ENCODE measurements at regions of chr3 and their contacts with region 1.

Region 1: DNA sequence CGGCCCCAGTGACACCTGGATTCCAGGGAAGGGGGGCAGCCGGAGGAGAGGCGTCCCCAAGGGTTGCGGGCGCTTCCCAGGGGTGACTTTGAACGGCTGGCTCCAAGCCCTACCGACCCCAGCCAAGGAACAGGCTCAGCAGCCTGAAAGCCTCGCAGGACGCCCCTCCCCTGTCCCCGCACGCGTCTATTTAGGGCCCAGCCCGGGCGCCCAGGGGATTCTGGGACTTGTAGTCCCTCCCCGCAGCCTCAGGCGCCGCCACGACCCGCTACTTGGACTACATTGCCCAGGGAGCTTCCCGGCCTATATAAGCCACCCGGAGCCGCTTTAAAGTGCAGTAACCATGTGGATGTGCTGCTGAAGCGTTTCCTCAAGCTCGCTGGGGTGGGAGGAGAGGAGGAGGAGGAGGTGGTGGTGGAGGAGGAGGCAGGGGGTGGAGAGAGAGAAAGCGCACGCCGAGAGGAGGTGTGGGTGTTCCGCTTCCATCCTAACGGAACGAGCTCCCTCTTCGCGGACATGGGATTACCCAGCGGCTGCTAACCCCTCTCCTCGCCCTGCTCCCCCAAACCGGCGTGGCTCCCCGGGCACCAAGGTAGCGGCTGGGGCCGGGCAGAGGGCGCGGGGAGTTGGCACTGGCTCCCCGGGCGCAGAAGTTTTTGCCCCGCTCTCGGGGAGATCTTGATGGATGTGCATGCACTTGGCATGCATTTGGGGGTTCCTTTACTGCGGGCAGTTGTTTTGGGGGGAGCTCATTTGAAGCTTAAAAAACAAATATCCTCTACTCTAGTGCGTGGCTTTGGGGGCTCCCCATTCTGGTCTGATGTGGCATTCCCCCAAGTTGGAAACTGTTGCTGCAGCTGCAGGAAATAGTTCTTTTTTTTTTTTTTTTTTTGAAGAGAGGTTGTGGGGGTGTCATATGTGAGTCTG is at the start of gene ITPR1:
- DNase-seq: peak in 1 of 2 donors; percentile 100
- H3K4me3 ChIP-seq: peak within 1 kb of the TSS; percentile 59 to 94
- H3K27ac ChIP-seq: peak within 1 kb of the TSS; percentile 77
- H3K4me1 ChIP-seq: peaks cover 32% of the 10 kb centered on the region
- H3K27me3 ChIP-seq: no peaks in the 10 kb centered on the region
- CTCF ChIP-seq: no peak
- POLR2A ChIP-seq: peak; percentile 89 to 100
- total RNA-seq, gene ITPR1: 108 TPM

Region 2: GRCh38 chr3:4350789-4351163 is 142.5 kb before region 1 on chr3:
- intact Hi-C with region 1: loop called (anchors 10 kb)
- DNase-seq: no peak
- H3K4me3 ChIP-seq: peak overlapping the region in 1 of 2 donors; percentile 23
- H3K27ac ChIP-seq: no peak overlapping the region
- H3K4me1 ChIP-seq: peaks cover 4% of the 10 kb centered on the region
- H3K27me3 ChIP-seq: no peaks in the 10 kb centered on the region
- CTCF ChIP-seq: peak; percentile 50 to 83 (median 69)
- POLR2A ChIP-seq: no peak

Region 3: DNA sequence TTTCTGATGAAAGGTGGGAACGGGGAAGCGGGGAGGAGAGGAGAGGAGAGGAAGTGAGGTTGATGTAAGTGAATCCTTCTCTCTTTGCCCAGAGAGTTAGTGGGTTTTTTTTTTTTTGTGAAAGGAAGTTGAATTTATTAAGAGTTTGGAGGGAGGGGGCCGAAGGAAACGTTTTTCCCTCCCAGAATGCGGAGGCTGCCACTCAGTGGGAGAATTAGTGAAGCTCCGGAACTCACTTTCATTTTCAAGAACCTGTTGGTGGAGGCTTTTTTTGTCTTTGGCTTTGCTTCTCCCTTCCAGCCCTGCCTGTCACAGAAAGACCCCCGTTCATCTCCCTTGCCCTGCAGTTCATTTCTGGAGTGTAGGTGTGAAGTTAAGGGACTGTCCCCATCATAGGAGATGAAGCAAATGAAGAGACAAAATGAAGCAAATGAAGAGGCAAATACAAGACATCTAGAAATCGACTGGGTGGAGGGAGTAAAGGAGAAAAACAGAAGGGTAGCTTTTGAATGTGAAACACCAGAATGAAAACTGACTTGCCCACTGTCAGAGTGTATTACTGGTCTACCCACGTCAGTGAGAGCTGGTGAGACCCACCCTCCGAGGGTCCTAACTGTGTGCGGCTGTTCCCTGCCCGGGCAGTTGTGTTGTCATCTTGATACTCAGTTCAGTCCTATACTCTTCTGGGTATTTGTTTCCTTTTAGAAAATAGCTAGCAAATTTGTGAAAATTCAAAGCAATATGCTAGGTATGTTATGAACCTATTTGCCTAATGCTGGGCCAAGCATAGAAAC is 91.4 kb after region 1 on chr3:
- intact Hi-C with region 1: loop called (anchors 5 kb)
- DNase-seq: peak in 1 of 2 donors; percentile 80
- H3K4me3 ChIP-seq: peak overlapping the region; percentile 8 to 30
- H3K27ac ChIP-seq: peak overlapping the region; percentile 74
- H3K4me1 ChIP-seq: peaks cover 60% of the 10 kb centered on the region
- H3K27me3 ChIP-seq: no peaks in the 10 kb centered on the region
- CTCF ChIP-seq: no peak
- POLR2A ChIP-seq: no peak

Region 4: DNA sequence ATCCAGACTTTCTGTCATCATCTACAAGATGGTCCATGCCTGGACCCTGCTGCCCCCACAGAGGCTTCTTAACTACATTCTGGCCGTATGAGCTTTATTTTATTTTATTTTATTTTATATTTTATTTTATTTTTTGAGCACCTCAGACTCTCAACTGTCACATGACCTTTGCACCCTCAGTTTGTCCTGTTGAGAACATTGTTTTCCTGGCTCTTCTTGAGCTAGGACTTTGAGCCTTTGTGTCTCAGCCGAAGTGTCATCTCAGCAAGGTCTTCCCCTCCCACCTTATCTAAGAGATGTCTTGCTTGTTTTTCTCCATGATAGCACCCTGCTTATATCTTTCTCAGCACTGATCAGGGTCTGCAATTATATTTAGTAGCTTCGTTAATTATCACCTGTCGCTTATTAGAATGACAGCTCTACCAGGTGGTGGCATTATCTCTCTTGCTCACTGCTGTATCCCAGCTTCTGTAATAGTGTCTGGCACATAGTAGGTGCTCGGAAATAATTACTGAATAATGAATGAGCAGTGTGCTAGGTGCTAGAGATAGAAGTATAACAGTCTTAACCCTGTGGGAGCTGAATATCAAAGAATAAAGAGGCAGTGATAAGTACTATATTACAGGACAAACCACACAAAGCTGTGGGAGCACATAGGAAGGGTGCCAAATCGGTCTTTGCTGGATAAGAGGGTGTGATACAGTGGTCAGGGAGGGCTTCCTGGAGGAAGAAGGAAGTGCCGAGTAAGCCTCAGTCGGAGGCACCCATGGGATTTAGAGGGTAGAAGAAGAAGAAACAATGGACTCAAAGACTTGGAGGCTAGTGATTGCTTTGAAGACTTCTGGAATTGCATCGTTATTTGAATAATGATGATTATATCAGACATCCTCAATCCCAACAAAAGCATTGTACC is 136.1 kb after region 1 on chr3:
- intact Hi-C with region 1: no loop called
- DNase-seq: no peak
- H3K4me3 ChIP-seq: no peak overlapping the region
- H3K27ac ChIP-seq: no peak overlapping the region
- H3K4me1 ChIP-seq: no peaks in the 10 kb centered on the region
- H3K27me3 ChIP-seq: no peaks in the 10 kb centered on the region
- CTCF ChIP-seq: no peak
- POLR2A ChIP-seq: no peak

Region 5: GRCh38 chr3:4711689-4711992 is 218.4 kb after region 1 on chr3:
- intact Hi-C with region 1: no loop called
- DNase-seq: no peak
- H3K4me3 ChIP-seq: no peak overlapping the region
- H3K27ac ChIP-seq: peak overlapping the region; percentile 27
- H3K4me1 ChIP-seq: peaks cover 9% of the 10 kb centered on the region
- H3K27me3 ChIP-seq: no peaks in the 10 kb centered on the region
- CTCF ChIP-seq: peak in 1 of 3 experiments; percentile 19
- POLR2A ChIP-seq: no peak

Measured in vagina (tissue), 2 donors.